ENCODE measurements at regions of chr5 and their contacts with region 1.

Region 1: GRCh38 chr5:15794052-15794985 is 294.3 kb downstream of the FBXL7 start:
- DNase-seq: no peak
- H3K4me3 ChIP-seq: peak overlapping the region in 47 of 59 donors; percentile 1 to 52 (median 28)
- H3K27ac ChIP-seq: peak overlapping the region; percentile 66 to 99 (median 92)
- H3K27me3 ChIP-seq: no peaks in the 10 kb centered on the region
- CTCF ChIP-seq: peak; percentile 25 to 80 (median 63)

Region 2: GRCh38 chr5:15285901-15286583 is 508.3 kb before region 1 on chr5:
- intact Hi-C with region 1: loop called in 1 of 2 experiments (anchors 5 kb)
- DNase-seq: peak in 4 of 10 donors; percentile 34 to 38 (median 36)
- H3K4me3 ChIP-seq: no peak overlapping the region
- H3K27ac ChIP-seq: peak overlapping the region in 14 of 59 donors; percentile 3 to 54 (median 27)
- H3K27me3 ChIP-seq: peaks cover 0 to 6% (median 0%) of the 10 kb centered on the region in 45 donors
- CTCF ChIP-seq: no peak

Region 3: GRCh38 chr5:15499528-15500324 is 294.6 kb before region 1 on chr5 and contains the start of gene FBXL7:
- intact Hi-C with region 1: loop called (anchors 2 to 5 kb)
- DNase-seq: peak; percentile 53 to 88 (median 71)
- H3K4me3 ChIP-seq: peak within 1 kb of the TSS; percentile 41 to 85 (median 72)
- H3K27ac ChIP-seq: peak within 1 kb of the TSS in 57 of 59 donors; percentile 24 to 93 (median 82)
- H3K27me3 ChIP-seq: peaks cover 0 to 38% (median 6%) of the 10 kb centered on the region in 45 donors
- CTCF ChIP-seq: peak in 49 of 56 donors; percentile 7 to 64 (median 41)
- total RNA-seq, gene FBXL7: 7.9 to 39.1 (median 15.8) TPM

Region 4: DNA sequence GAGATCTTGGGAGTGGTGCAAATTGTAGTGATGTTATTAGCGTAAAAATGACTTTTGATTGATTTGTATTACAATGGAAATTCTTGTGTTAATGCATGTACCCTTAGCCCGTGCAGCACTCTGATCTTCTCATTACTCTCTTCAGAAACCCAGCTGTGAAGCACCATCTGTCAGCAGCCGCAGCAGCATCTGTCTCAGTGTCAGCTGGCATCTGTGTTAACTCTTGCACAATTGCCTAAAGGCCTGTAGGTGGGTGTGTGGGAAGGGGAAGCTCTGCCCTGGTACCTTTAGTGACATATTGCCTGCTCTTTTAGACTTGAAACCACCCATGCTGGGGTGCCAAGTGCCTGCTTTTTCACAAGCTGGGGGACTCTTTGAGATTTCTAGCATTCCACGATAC is 193.0 kb before region 1 on chr5:
- intact Hi-C with region 1: loop called in 1 of 2 experiments (anchors 10 kb)
- DNase-seq: peak in 1 of 10 donors; percentile 48
- H3K4me3 ChIP-seq: no peak overlapping the region
- H3K27ac ChIP-seq: peak overlapping the region in 17 of 59 donors; percentile 3 to 58 (median 21)
- H3K27me3 ChIP-seq: no peaks in the 10 kb centered on the region
- CTCF ChIP-seq: no peak

Region 5: DNA sequence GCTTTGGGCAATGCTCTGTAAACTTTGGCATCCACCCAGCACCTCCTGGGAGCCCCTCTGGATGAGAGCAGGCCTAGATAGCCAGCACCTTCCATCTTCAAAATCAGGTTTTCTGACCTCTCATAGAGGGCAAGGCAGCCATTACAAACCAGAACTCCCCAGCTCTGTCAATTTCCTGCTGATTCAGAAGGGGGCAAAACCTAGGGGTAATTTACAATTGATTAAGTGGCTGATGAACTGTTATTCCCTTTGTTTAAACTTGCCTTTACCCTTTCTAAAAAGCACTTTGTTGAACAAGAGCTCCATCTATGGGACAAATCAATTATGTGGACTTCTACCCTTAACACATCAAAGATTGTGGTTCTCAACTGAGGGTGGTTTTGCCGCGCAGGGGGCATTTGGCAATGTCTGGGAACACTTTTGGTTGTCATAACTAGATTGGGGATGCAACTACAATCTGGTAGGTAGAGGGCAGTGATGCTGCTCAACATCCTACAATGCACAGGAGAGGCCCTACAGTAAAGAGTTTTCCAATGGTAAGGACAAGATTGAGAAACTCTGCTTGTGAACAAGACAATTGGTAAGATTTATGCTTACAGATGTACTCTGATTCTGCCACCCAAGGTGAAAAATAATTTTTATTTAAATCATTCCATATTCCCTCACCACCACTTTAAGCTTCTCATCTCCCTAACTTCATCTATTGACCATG is 201.2 kb after region 1 on chr5:
- intact Hi-C with region 1: loop called in 1 of 2 experiments (anchors 10 kb)
- DNase-seq: peak in 1 of 10 donors; percentile 4
- H3K4me3 ChIP-seq: no peak overlapping the region
- H3K27ac ChIP-seq: no peak overlapping the region
- H3K27me3 ChIP-seq: no peaks in the 10 kb centered on the region
- CTCF ChIP-seq: peak in 52 of 56 donors; percentile 33 to 69 (median 50)